Right ventricle myocardium superior (tissue), 1 donor: ENCODE measurements at regions of chr15 and their contacts with region 1.

Region 1: DNA sequence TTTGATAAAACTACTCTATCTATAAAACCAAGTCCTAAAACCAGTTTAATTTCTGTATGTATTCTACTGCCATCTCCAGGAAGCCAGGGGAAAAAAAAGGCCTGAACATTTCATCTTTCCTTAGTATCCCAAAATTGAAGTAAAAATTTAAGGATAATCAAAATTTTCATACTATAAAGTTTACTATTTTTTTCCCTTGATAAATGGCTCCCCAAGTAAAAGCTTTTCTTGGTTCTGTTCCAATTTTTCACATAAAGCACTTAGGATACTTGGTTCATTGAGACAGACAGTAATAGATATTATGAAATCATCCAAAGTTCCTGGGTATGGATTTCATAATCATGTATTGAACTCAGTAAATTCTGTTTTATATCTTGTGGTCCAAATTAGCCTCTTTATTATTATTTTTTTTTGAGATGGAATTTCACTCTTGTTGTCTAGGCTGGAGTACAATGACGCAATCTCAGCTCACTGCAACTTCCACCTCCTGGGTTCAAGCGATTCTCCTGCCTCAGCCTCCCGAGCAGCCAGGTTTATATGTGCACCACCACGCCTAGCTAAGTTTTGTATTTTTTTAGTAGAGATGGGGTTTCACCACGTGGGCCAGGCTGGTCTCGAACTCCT is 34.5 kb downstream of the ICE2 start:
- DNase-seq: no peak
- ATAC-seq: peak; percentile 56

Region 2: DNA sequence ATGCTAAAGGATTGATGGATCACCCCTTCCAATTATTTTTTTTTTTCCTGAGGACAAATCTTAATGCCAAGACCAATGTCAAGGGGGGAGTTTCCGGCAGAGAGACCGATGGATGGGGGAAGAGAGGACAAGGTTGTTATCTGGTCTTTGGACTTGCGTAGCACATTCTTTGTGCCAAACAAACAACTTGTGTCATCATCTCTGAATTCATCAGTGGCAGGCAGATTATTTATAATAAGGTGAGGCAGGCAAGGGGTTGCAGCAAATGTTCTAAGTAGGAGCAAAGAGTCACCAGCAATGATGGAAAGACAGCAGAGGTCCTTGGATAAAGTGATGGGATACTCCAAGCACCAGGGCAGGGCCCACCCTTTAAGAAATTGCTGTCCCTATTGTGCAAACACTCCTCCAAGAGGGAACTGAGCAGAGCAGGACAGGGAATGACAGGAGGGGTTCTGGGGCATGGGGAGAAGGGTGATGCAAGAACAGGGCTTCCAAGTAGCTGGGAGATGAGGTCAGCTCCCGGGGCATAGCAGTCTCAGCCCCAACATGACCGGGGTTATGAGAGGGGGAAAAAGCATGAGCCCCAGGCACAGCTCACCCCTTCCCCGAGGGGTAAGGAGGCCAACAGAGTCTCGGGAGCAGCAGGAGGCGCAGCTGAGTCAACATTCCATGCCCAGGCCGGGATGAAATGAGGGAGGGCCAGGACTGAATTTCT is 104.0 kb before region 1 on chr15:
- intact Hi-C with region 1: loop called (anchors 5 kb)
- DNase-seq: no peak
- ATAC-seq: peak; percentile 25

Region 3: DNA sequence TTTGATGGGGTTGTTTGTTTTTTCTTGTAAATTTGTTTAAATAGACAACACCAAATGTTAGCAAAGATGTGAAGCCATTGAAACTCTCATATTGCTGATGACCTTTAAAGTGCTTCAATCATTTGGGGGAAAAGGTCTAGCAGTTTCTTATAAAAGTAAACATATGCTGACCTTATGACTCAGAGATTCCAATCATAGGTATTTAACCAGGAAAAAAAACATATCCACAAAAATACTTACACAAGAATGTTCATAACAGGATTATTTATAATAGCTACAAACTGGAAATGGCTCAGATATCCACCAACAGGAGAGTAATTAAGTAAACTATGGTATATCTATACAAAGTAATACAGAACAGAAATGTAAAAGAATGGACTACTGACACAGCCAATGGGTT is 811.8 kb after region 1 on chr15:
- intact Hi-C with region 1: no loop called
- DNase-seq: no peak
- ATAC-seq: no peak